Activated T-helper 1 cell treated with anti-CD3 and anti-CD28 coated beads, Interleukin-12 subunit alpha, Interleukin-12 subunit beta, Interleukin-2, Interleukin-4 antibody, amounts not matched to agents 30 ng/mL and 10 ng/mL and 1 ng/mL, durations not matched to agents 14 hours and 24 hours and 36 hours (primary cell): ENCODE measurements at regions of chr7 and their contacts with region 1.

Region 1: DNA sequence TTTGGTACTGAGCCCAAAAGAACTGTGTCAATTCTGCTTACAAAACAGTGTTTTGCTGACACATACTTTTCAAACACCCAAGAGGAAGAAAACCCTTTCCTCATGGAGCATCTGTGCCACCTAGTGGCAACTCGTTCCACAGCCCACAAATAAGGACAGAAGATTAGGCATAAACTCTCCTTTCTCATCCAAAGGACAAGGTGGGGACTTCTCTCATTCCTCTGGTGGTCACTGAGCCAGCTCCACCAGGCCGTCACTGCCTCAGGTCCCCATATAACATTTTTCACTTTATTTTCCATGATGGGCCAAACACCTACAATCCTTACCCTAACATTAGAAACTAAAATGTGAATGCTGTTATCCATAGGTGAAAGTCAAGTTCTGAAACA is 76.9 kb downstream of the RNF216 start:
- DNase-seq: peak; percentile 65
- H3K4me3 Mint-ChIP-seq: no peak overlapping the region
- H3K27ac Mint-ChIP-seq: no peak overlapping the region
- H3K4me1 Mint-ChIP-seq: peaks cover 66% of the 10 kb centered on the region
- H3K27me3 Mint-ChIP-seq: no peaks in the 10 kb centered on the region

Region 2: DNA sequence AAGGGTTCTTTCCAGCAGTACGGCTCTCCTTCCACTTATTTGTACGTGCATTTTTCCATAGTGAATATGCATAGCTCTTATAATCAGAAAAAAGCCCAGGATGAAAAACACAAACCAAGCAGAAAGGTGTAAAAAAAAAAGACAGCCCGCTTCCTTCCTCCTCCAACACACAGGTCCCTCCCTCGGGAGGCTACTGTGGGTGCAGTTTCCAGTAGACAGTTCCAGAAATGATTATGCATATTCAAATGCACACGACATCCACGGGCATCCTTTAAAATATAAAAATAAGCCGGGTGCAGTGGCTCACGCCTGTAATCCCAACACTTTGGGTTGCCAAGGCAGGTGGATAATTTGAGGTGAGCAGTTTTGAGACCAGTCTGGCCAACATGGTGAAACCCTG is 340.8 kb before region 1 on chr7:
- intact Hi-C with region 1: loop called (anchors 10 kb)
- DNase-seq: no peak
- H3K4me3 Mint-ChIP-seq: peak overlapping the region; percentile 7
- H3K27ac Mint-ChIP-seq: peak overlapping the region; percentile 61
- H3K4me1 Mint-ChIP-seq: peaks cover 26% of the 10 kb centered on the region
- H3K27me3 Mint-ChIP-seq: no peaks in the 10 kb centered on the region

Region 3: GRCh38 chr7:5423844-5424688 is 280.5 kb before region 1 on chr7:
- intact Hi-C with region 1: loop called (anchors 5 kb)
- DNase-seq: no peak
- H3K4me3 Mint-ChIP-seq: peak overlapping the region; percentile 79
- H3K27ac Mint-ChIP-seq: peak overlapping the region; percentile 81
- H3K4me1 Mint-ChIP-seq: peaks cover 17% of the 10 kb centered on the region
- H3K27me3 Mint-ChIP-seq: peaks cover 48% of the 10 kb centered on the region

Region 4: DNA sequence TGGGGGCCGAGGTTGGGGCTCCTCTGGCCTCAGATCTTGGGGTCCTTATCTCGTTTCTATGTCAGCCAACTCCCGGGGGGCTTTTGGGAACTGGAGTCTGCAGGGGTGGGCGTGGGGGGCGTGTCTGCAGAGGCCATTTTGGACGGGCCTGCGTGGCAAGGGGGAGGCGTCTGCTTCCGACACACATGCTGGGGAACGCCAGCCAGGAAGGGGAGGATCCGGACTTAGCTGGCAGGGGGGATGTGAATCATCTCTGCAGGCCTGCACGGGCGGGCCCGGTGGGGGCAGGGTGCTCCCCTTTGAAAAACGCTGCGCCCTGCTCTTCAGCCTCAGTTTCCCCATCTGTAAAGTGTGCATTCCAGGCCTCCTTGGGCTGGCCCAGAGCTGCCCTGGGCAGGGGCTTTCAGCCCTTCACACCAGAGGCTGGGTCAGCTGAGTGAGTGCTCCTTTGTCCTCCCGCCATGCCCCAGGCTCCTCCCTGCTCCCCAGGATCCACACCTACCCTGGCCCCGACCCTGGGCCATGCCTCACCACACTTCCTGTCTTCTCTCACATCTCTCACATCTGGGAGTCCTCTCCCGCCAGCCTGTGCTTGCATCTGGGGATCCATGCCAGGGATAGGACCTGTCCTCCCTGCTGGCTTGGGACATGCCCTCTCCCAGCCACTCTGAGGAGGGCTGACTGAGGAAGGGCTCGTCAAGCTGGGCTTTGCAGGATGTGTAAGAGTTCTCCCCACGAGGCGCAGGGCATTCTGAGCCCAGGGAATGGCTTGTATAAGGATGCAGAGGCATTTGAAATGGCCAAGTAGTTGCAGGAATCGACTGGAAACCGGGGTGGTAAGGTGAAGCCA is 108.3 kb before region 1 on chr7:
- intact Hi-C with region 1: loop called (anchors 1 kb)
- DNase-seq: peak; percentile 56
- H3K4me3 Mint-ChIP-seq: peak overlapping the region; percentile 75
- H3K27ac Mint-ChIP-seq: peak overlapping the region; percentile 91
- H3K4me1 Mint-ChIP-seq: peaks cover 21% of the 10 kb centered on the region
- H3K27me3 Mint-ChIP-seq: peaks cover 17% of the 10 kb centered on the region

Region 5: GRCh38 chr7:5677538-5678294 is 26.8 kb before region 1 on chr7:
- intact Hi-C with region 1: loop called (anchors 1 kb)
- DNase-seq: no peak
- H3K4me3 Mint-ChIP-seq: no peak overlapping the region
- H3K27ac Mint-ChIP-seq: no peak overlapping the region
- H3K4me1 Mint-ChIP-seq: peaks cover 30% of the 10 kb centered on the region
- H3K27me3 Mint-ChIP-seq: no peaks in the 10 kb centered on the region

Region 6: DNA sequence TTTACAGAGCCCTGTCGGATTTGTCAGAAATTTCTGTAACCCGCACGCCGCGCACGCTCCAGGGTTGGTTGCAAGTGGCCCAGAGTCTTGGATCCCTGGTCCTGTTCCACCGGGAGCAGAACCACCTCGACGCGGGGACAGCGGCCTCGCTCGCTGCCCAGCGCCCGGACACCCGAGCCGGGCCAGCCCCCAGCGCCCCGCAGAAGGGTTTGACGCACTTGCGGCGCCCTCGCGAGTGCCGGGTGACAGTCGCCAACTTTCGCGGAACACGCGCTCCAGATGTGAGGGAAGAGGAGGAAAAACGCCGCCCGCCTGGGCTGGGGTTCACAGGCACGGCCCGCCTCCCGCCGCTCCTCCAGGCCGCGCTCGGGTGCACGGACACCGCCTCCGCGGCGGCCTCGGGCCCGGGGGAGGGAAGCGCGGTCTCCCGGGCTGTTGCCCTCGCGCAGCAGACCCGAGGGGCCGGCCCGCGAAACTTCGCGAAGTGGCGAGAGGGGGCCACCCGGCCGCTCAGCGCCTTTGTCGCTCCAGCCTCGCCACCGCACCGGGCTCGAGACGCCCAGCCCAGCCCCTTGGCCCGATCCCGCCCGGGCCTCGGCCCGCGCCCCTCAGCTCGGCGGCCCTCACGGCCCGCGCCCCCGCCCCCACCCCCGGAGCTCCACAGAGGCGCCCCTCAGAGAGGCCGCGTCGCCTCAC is 76.4 kb after region 1 on chr7:
- intact Hi-C with region 1: loop called (anchors 1 kb)
- DNase-seq: peak; percentile 19
- H3K4me3 Mint-ChIP-seq: peak overlapping the region; percentile 86
- H3K27ac Mint-ChIP-seq: peak overlapping the region; percentile 86
- H3K4me1 Mint-ChIP-seq: peaks cover 31% of the 10 kb centered on the region
- H3K27me3 Mint-ChIP-seq: no peaks in the 10 kb centered on the region